ENCODE measurements at regions of chr11 and their contacts with region 1.

Region 1: DNA sequence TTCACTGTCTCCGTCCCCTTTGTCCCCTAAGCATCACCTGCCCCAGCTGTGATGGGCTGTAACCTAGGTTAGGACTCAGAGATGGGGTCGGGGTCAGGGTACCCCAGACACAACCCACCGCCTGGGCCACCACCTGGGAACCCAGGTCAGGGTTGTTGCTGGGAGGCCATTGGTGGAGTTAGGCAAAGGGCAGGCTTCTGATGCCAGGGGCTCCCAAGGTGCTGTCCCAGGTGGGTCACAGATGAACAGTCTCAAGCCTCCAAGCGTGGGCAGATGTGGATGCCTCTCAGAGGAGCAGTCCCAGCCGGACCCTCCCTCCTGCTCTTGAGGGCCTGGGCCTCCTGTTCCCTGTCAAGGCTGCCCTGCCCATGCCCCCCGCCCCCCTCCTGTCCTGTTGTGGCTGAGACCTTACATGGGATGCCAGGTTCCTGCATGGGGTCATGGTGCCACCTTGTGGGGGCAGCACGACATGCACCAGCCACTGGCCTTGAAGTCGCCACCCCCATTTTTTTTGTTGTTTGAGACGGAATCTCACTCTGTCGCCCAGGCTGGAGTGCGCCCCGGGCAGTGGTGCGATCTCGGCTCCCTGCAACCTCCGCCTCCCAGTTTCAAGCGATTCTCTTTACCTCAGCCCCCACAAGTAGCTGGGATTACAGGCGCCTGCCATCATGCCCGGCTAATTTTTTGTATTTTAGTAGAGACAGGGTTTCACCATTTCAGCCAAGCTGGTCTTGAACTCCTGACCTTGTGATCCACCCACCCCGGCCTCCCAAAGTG is 12.1 kb downstream of the GATD1 start:
- DNase-seq: peak; percentile 60 to 82
- ATAC-seq: peak; percentile 63 to 64
- H3K4me3 ChIP-seq: no peak overlapping the region
- H3K27ac ChIP-seq: peak overlapping the region in 1 of 2 experiments; percentile 56; a peak in 2 of 6 replicates
- H3K4me1 ChIP-seq: peaks cover 29% of the 10 kb centered on the region
- CTCF ChIP-seq: peak; percentile 64
- EP300 ChIP-seq: no peak
- POLR2A ChIP-seq: no peak
- RAD21 ChIP-seq: peak; percentile 59 to 69

Region 2: DNA sequence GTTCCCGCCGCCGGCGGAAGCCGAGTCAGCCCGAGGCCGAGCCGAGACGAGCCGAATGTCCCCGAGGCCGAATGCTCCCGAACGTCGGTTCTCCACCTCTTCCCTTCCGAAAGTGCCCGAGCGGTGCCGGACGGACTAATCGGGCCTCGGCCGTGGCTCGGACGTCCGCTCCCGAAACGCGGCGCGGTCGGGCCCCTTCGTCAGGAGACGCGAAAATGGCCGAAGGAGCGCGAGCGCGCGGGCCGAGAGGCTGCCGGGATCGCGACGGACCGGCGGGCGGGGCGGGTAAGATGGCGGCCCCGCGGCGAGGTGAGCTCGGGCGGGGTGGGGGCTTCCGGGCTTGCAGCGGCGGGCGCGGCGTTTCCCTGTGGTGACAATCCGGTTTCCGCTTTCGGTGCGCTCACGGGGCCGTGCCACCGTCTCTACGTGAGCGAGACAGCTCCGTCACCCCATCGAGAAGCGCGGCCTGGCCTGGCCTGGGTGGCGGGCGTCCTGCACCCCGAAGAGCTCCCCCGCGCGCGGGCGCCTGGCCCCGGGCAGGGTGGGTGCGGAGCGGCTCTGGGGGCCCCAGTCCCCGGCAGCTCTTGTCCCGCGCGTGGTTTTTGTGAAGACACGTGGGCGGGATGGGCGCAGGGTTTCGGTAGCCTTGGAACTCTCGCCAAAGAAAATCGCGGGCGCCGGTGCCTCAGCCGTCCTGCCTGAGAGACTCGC is 69.5 kb before region 1 on chr11 and contains the start of gene TMEM80:
- CTCF ChIA-PET with region 1: interaction called, 15 read pairs
- POLR2A ChIA-PET with region 1: interaction called, 4 read pairs
- DNase-seq: peak; percentile 54 to 98
- ATAC-seq: peak; percentile 75 to 89
- H3K4me3 ChIP-seq: peak within 1 kb of the TSS; percentile 81
- H3K27ac ChIP-seq: peak within 1 kb of the TSS; percentile 95 to 98
- H3K4me1 ChIP-seq: peaks cover 42% of the 10 kb centered on the region
- CTCF ChIP-seq: no peak
- EP300 ChIP-seq: no peak
- POLR2A ChIP-seq: peak; percentile 89
- RAD21 ChIP-seq: no peak
- polyA plus RNA-seq, gene TMEM80: 15.1 and 15.2 TPM in 2 replicates

Region 3: GRCh38 chr11:747158-748006 is 17.8 kb before region 1 on chr11 and contains the start of gene TALDO1:
- CTCF ChIA-PET with region 1: interaction called, 32 read pairs
- POLR2A ChIA-PET with region 1: interaction called, 9 read pairs
- DNase-seq: peak; percentile 88
- ATAC-seq: peak; percentile 94 to 95
- H3K4me3 ChIP-seq: peak within 1 kb of the TSS; percentile 99
- H3K27ac ChIP-seq: peak within 1 kb of the TSS; percentile 87 to 97
- H3K4me1 ChIP-seq: peaks cover 21% of the 10 kb centered on the region
- CTCF ChIP-seq: no peak; the same call in 2 of the 3 replicates
- EP300 ChIP-seq: no peak
- POLR2A ChIP-seq: peak; percentile 64
- RAD21 ChIP-seq: no peak
- polyA plus RNA-seq, gene TALDO1: 287 and 296 TPM in 2 replicates

Region 4: GRCh38 chr11:777288-778255 is 12.4 kb after region 1 on chr11 and contains the start of gene GATD1:
- CTCF ChIA-PET with region 1: interaction called, 44 read pairs
- POLR2A ChIA-PET with region 1: interaction called, 4 read pairs
- DNase-seq: peak; percentile 87 to 96
- ATAC-seq: peak; percentile 75 to 77
- H3K4me3 ChIP-seq: peak within 1 kb of the TSS; percentile 84
- H3K27ac ChIP-seq: peak within 1 kb of the TSS; percentile 91 to 95
- H3K4me1 ChIP-seq: peaks cover 43% of the 10 kb centered on the region
- CTCF ChIP-seq: no peak
- EP300 ChIP-seq: no peak
- POLR2A ChIP-seq: peak; percentile 95
- RAD21 ChIP-seq: no peak
- polyA plus RNA-seq, gene GATD1: 14.5 and 16.8 TPM in 2 replicates

Region 5: GRCh38 chr11:783581-784015 is 18.4 kb after region 1 on chr11:
- CTCF ChIA-PET with region 1: interaction called, 44 read pairs
- POLR2A ChIA-PET with region 1: no interaction called
- DNase-seq: peak in 1 of 2 experiments; percentile 50
- ATAC-seq: peak in 1 of 2 experiments; percentile 65; a peak in 3 of 6 replicates
- H3K4me3 ChIP-seq: no peak overlapping the region
- H3K27ac ChIP-seq: no peak overlapping the region
- H3K4me1 ChIP-seq: peaks cover under 1% of the 10 kb centered on the region; the same call in 1 of the 3 replicates
- CTCF ChIP-seq: no peak
- EP300 ChIP-seq: no peak
- POLR2A ChIP-seq: no peak
- RAD21 ChIP-seq: no peak

Region 6: GRCh38 chr11:819129-819931 is 54.1 kb after region 1 on chr11:
- CTCF ChIA-PET with region 1: no interaction called
- POLR2A ChIA-PET with region 1: no interaction called
- DNase-seq: peak in 1 of 2 experiments; percentile 88
- ATAC-seq: peak; percentile 40 to 66
- H3K4me3 ChIP-seq: peak overlapping the region; percentile 99
- H3K27ac ChIP-seq: peak overlapping the region; percentile 87 to 90
- H3K4me1 ChIP-seq: peaks cover 32% of the 10 kb centered on the region
- CTCF ChIP-seq: no peak
- EP300 ChIP-seq: no peak
- POLR2A ChIP-seq: peak; percentile 62
- RAD21 ChIP-seq: no peak

Region 7: GRCh38 chr11:848380-848931 is 83.2 kb after region 1 on chr11:
- CTCF ChIA-PET with region 1: no interaction called
- POLR2A ChIA-PET with region 1: no interaction called
- DNase-seq: peak in 1 of 2 experiments; percentile 72
- ATAC-seq: peak in 1 of 2 experiments; percentile 9; a peak in 2 of 6 replicates
- H3K4me3 ChIP-seq: no peak overlapping the region
- H3K27ac ChIP-seq: peak overlapping the region; percentile 37 to 99; a peak in 3 of 6 replicates
- H3K4me1 ChIP-seq: peaks cover 67% of the 10 kb centered on the region
- CTCF ChIP-seq: peak; percentile 64
- EP300 ChIP-seq: no peak
- POLR2A ChIP-seq: no peak
- RAD21 ChIP-seq: peak; percentile 72 to 78

Measured in A549 (cell line).